AG04449 (cell line): ENCODE measurements at regions of chr17 and their contacts with region 1.

Region 1: GRCh38 chr17:34637548-34638525 is 58.5 kb downstream of the TMEM132E start:
- DNase-seq: peak; percentile 2
- H3K4me3 ChIP-seq: no peak overlapping the region; the same call in 1 of the 2 replicates
- CTCF ChIP-seq: peak; percentile 97

Region 2: GRCh38 chr17:34420254-34420766 is 217.5 kb before region 1 on chr17:
- CTCF ChIA-PET with region 1: interaction called, 20 read pairs
- POLR2A ChIA-PET with region 1: no interaction called
- DNase-seq: no peak
- H3K4me3 ChIP-seq: no peak overlapping the region
- CTCF ChIP-seq: peak; percentile 85

Region 3: DNA sequence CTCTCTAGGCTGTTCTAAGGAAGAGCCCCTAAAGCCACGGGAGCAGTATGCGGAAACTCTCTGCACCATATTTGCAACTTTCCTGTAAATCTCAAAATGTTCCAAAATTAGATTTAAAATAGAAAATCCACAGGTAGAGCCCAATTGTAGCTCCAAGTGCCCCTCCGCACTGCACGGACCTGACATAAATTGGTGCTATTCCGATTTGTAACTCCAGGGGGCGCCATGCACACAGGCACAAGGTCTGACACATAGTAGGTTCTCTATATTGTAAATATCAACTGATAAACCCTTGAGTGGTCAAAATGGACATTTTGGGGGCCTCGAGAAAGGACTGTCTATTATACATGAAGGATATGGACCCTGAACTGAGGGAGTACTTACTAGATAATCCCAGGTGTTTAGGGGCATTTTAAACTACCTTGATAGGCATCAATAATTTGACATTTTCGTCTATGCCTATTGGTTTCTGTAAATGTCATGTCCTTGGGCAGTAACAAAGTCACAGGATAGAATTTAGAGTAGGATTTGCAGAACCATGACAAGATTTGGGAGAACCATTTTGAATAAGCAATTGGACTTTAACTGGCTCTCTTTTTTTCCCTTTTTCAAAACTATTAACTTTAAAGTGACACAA is 95.0 kb before region 1 on chr17:
- CTCF ChIA-PET with region 1: interaction called, 26 read pairs
- POLR2A ChIA-PET with region 1: no interaction called
- DNase-seq: no peak
- H3K4me3 ChIP-seq: no peak overlapping the region
- CTCF ChIP-seq: peak; percentile 67

Region 4: DNA sequence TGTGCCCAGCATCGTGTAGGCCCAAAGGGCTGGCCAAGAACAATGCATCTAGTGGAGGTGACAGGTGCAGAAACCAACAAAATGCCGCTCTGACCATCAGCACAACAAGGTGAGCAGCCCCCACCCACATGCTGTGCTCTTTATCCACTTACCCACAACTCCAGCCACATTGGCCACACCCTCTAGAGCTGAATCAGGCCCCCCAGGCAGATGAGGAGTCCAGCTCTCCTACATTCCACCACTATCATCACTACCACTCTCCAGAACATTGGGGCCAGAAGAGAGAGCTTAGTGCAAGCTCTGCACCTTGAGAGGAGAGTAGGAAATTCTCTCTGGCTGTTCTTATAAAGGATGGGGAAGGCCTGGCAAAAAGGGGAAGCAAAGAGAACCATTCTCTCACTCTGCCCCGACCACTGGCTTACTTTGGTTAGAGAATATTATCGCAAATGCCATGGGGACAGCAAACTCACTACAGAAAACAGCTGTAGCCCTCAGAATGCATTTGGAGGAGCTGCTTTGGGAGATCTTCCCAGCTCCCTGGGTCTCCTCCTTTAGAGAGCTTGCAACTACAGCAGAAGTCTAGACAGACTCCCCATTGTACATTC is 16.5 kb after region 1 on chr17:
- CTCF ChIA-PET with region 1: no interaction called
- POLR2A ChIA-PET with region 1: no interaction called
- DNase-seq: no peak
- H3K4me3 ChIP-seq: no peak overlapping the region
- CTCF ChIP-seq: no peak